ENCODE measurements at regions of chr4 and their contacts with region 1.

Region 1: GRCh38 chr4:184733654-184734524 is at the start of gene CENPU:
- DNase-seq: peak; percentile 96
- H3K4me3 Mint-ChIP-seq: peak within 1 kb of the TSS; percentile 100
- H3K27ac Mint-ChIP-seq: peak within 1 kb of the TSS; percentile 95
- H3K4me1 Mint-ChIP-seq: peaks cover 38% of the 10 kb centered on the region
- H3K27me3 Mint-ChIP-seq: no peaks in the 10 kb centered on the region
- total RNA-seq, gene CENPU: 69.6 to 69.7 TPM

Region 2: DNA sequence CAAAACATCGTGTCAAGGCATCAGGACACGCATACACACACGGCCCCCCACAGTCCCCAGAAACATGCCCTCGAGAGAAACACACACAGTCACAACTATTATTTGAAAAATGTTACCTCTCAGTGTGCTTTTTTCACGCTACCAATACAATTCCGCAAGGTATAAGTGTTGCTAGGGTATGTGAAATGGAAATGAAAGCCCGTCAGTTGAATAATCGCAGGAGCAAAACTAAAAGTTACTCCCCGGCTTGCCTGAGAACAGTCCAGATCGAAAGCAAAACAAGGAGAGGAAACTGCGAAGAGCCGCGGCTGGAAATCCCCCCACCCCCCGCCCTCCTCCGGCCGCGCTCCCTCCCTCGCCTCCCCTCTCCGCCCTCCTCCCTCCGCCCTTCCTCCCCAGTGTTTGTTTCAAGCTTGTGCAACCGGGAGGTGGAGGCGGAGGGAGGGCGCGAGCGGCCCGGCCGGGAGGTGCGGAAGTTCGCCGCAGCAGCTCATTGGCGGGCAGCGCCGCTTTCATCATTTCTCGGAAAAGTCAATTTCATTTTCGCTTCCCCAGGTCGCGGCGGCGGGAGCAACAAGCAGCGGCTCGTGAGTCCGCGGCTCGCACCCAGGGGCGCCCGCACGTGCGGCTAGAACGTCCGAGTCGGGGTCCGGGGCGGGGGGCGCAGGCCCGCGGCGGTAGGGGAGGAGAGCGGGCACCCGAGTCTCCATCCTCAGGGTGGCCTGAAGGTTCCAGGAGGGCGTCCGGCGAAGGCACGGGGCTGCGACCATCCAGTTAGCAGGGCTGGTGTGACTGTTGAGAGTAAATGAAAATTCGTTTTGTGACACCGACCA is 259.4 kb before region 1 on chr4 and contains the start of gene IRF2:
- CTCF ChIA-PET with region 1: interaction called, 4 read pairs
- POLR2A ChIA-PET with region 1: interaction called, 14 read pairs
- DNase-seq: peak; percentile 98
- H3K4me3 Mint-ChIP-seq: peak within 1 kb of the TSS; percentile 91
- H3K27ac Mint-ChIP-seq: peak within 1 kb of the TSS; percentile 96
- H3K4me1 Mint-ChIP-seq: peaks cover 59% of the 10 kb centered on the region
- H3K27me3 Mint-ChIP-seq: no peaks in the 10 kb centered on the region
- total RNA-seq, gene IRF2: 77.2 to 78.5 TPM

Region 3: GRCh38 chr4:184649026-184649970 is 84.6 kb before region 1 on chr4 and contains the starts of genes CASP3 and PRIMPOL:
- CTCF ChIA-PET with region 1: interaction called, 29 read pairs
- POLR2A ChIA-PET with region 1: interaction called, 103 read pairs
- DNase-seq: peak; percentile 97
- H3K4me3 Mint-ChIP-seq: peak within 1 kb of the TSS; percentile 91
- H3K27ac Mint-ChIP-seq: peak within 1 kb of the TSS; percentile 89
- H3K4me1 Mint-ChIP-seq: peaks cover 63% of the 10 kb centered on the region
- H3K27me3 Mint-ChIP-seq: no peaks in the 10 kb centered on the region
- total RNA-seq, gene CASP3: 71.4 to 77.1 TPM
- total RNA-seq, gene PRIMPOL: 19.2 to 23.4 TPM

Region 4: DNA sequence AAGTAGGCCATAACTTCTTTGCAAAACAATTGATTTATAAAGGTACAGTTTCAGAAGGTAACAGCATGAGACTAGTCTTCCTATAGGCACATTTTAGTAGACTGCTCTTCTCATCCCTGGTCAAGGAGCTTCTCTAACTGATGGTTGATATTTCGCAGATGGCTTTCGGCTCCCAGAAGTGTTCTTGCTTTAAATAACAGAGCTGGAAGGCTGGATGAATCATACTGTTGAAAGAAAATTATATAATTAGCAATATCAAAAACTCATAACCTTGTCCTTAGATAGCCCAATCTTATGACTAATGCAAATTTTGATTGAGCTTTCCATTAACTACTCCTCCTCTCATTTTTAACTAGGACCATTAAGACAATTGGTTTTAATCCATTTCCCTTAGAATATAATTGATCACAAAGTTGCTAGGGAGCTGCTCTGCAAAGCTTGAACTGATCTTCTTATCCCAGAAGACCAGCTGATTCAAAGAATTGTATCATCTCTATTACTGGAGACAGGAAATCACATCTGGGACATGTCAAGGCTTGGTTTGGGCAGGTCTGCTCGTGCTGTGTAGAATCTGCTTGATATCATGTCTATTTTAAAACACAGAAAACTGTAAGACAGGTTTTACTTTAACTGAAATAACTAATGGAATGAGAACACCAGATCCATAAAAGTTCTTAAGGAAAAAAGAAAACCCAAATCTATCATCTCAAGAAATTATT is 38.6 kb before region 1 on chr4:
- CTCF ChIA-PET with region 1: interaction called, 3 read pairs
- POLR2A ChIA-PET with region 1: interaction called, 11 read pairs
- DNase-seq: no peak
- H3K4me3 Mint-ChIP-seq: no peak overlapping the region
- H3K27ac Mint-ChIP-seq: peak overlapping the region; percentile 11
- H3K4me1 Mint-ChIP-seq: peaks cover 5% of the 10 kb centered on the region
- H3K27me3 Mint-ChIP-seq: no peaks in the 10 kb centered on the region

Region 5: DNA sequence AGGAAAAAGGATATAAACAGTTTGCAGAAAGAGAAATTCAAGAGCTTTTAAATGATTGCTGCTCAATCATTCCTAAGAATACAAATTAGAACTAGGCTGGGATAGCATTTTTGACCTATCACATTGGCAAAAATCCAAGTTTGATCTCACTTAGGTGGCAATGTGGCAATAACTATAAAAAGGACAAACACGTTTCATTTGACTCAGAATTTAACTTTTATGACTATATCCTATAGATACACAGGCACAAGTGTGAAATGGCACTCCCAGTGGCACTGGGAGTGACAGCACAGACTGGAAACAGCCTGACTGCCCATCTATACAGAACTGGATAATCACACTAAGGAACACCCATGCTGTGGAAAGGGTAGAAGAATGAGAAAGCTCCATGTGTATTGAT is 11.1 kb before region 1 on chr4:
- CTCF ChIA-PET with region 1: interaction called, 8 read pairs
- POLR2A ChIA-PET with region 1: interaction called, 80 read pairs
- DNase-seq: no peak
- H3K4me3 Mint-ChIP-seq: no peak overlapping the region
- H3K27ac Mint-ChIP-seq: no peak overlapping the region
- H3K4me1 Mint-ChIP-seq: peaks cover 44% of the 10 kb centered on the region
- H3K27me3 Mint-ChIP-seq: no peaks in the 10 kb centered on the region

Region 6: GRCh38 chr4:184762100-184762499 is 28.2 kb after region 1 on chr4:
- CTCF ChIA-PET with region 1: no interaction called
- POLR2A ChIA-PET with region 1: interaction called, 19 read pairs
- DNase-seq: peak; percentile 57
- H3K4me3 Mint-ChIP-seq: peak overlapping the region; percentile 60
- H3K27ac Mint-ChIP-seq: peak overlapping the region; percentile 85
- H3K4me1 Mint-ChIP-seq: peaks cover 16% of the 10 kb centered on the region
- H3K27me3 Mint-ChIP-seq: no peaks in the 10 kb centered on the region

Measured in activated CD4-positive, alpha-beta memory T cell treated with anti-CD3 and anti-CD28 coated beads, Interleukin-2, amount 10 ng/mL, durations not matched to agents 7 days and 5 days (primary cell).